ENCODE measurements at regions of chr16 and their contacts with region 1.

Region 1: DNA sequence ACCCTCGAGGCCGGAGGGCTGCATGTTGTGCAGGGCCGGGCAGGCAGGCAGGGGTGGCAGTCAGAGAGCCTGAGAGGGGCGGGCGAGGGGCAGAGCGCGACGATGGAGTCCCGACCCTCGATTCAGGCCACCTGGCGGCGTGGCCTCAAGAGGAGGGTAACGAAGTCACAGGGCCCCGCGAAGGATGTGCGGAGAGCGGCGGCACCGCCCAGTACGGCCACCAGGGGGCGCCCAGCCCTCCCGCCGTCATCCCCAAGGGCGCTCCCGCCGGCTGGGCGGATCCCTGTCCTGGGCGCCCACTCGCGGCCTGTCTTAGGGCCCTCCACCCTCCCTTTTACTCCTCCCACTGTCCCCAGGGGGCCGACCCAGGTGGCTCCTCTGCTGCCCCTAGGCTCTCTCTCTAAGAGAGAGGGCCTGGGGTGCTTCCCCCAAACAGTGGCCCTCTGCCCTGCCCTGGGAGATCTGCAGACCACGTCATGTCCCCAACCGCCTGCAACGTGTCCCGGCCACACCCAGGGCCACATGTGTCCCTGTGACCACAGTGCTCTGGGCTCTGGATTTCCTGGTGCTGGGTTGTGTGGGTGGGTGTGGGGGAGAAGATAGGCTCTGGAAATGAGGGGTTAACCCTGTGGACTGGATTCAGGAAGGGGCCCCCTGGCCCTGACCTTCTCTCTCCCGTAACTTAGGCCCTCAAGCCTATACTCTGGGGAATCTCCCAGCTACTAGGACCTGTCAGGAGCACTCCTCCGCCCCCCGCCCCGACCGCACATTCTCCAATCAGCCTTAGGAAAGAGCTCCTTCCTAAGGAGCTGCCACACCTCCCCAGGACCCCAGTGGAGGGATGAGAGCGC is 5.9 kb downstream of the DPEP2 start:
- DNase-seq: peak; percentile 30 to 89
- H3K4me3 ChIP-seq: peak overlapping the region; percentile 29 to 55
- H3K27ac ChIP-seq: peak overlapping the region; percentile 23 to 26
- H3K4me1 ChIP-seq: peaks cover 4% of the 10 kb centered on the region in 2 donors
- H3K27me3 ChIP-seq: no peaks in the 10 kb centered on the region
- CTCF ChIP-seq: peak; percentile 97 to 99 (median 98)

Region 2: GRCh38 chr16:67968400-67969253 is 24.8 kb before region 1 on chr16 and contains the start of gene SLC12A4:
- intact Hi-C with region 1: loop called (anchors 2 kb)
- DNase-seq: peak; percentile 54 to 94
- H3K4me3 ChIP-seq: peak within 1 kb of the TSS; percentile 79 to 83
- H3K27ac ChIP-seq: peak within 1 kb of the TSS; percentile 94 to 98
- H3K4me1 ChIP-seq: peaks cover 11 to 39% of the 10 kb centered on the region in 2 donors
- H3K27me3 ChIP-seq: no peaks in the 10 kb centered on the region
- CTCF ChIP-seq: no peak
- total RNA-seq, gene SLC12A4: 83.2 TPM

Region 3: GRCh38 chr16:68022704-68023522 is 29.5 kb after region 1 on chr16 and contains the starts of genes DDX28 and DUS2:
- intact Hi-C with region 1: loop called (anchors 2 kb)
- DNase-seq: peak; percentile 66 to 94
- H3K4me3 ChIP-seq: peak within 1 kb of the TSS; percentile 84 to 87
- H3K27ac ChIP-seq: peak within 1 kb of the TSS; percentile 66 to 87
- H3K4me1 ChIP-seq: peaks cover 8 to 14% of the 10 kb centered on the region in 2 donors
- H3K27me3 ChIP-seq: no peaks in the 10 kb centered on the region
- CTCF ChIP-seq: peak in 1 of 3 experiments; percentile 7
- total RNA-seq, gene DDX28: 3.0 TPM
- total RNA-seq, gene DUS2: 7.6 TPM

Region 4: GRCh38 chr16:68040507-68041288 is 47.3 kb after region 1 on chr16:
- intact Hi-C with region 1: loop called (anchors 1 kb)
- DNase-seq: peak in 1 of 2 donors; percentile 88
- H3K4me3 ChIP-seq: no peak overlapping the region
- H3K27ac ChIP-seq: no peak overlapping the region
- H3K4me1 ChIP-seq: no peaks in the 10 kb centered on the region
- H3K27me3 ChIP-seq: no peaks in the 10 kb centered on the region
- CTCF ChIP-seq: peak; percentile 76 to 87 (median 87)

Region 5: GRCh38 chr16:68229431-68230198 is 236.2 kb after region 1 on chr16:
- intact Hi-C with region 1: loop called (anchors 1 kb)
- DNase-seq: peak in 1 of 2 donors; percentile 65
- H3K4me3 ChIP-seq: no peak overlapping the region
- H3K27ac ChIP-seq: no peak overlapping the region
- H3K4me1 ChIP-seq: peaks cover 0 to 2% of the 10 kb centered on the region in 2 donors
- H3K27me3 ChIP-seq: no peaks in the 10 kb centered on the region
- CTCF ChIP-seq: peak; percentile 83 to 92 (median 86)

Measured in ascending aorta (tissue), 2 donors.